Adrenal gland (tissue), 19 donors: ENCODE measurements at regions of chr12 and their contacts with region 1.

Region 1: GRCh38 chr12:13367973-13368372 is 171.4 kb downstream of the EMP1 start:
- DNase-seq: no peak
- H3K4me3 ChIP-seq: no peak overlapping the region
- H3K27ac ChIP-seq: no peak overlapping the region
- H3K4me1 ChIP-seq: no peaks in the 10 kb centered on the region
- H3K27me3 ChIP-seq: no peaks in the 10 kb centered on the region
- CTCF ChIP-seq: no peak
- POLR2A ChIP-seq: no peak

Region 2: GRCh38 chr12:13661005-13661887 is 293.3 kb after region 1 on chr12:
- intact Hi-C with region 1: loop called in 1 of 2 experiments (anchors 5 kb)
- DNase-seq: peak; percentile 37 to 76 (median 59)
- H3K4me3 ChIP-seq: no peak overlapping the region
- H3K27ac ChIP-seq: no peak overlapping the region
- H3K4me1 ChIP-seq: no peaks in the 10 kb centered on the region
- H3K27me3 ChIP-seq: peaks cover 4% of the 10 kb centered on the region
- CTCF ChIP-seq: peak; percentile 45 to 85 (median 68)
- POLR2A ChIP-seq: no peak